ENCODE measurements at regions of chr6 and their contacts with region 1.

Region 1: DNA sequence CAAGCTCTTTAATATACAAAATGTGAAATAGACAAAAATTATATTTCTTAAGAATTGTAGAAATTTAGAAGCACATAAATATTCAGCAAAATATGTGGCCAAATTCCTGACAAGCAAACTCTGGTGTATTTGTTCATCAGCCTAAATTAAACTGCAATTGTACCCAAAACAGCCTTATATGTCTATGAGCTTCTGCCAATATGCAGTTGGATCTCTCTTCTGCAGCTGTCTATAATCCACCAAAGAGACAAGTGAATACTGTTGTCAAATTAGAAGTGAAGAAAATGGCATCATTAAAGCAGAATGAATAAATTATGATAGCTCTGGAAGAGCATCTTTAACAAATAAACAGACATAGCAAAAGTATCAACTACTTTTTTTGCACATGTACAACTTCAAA is 755.7 kb downstream of the GRIK2 start:
- DNase-seq: no peak
- ATAC-seq: no peak

Region 2: GRCh38 chr6:101341926-101342325 is 807.3 kb before region 1 on chr6:
- intact Hi-C with region 1: loop called (anchors 10 kb)
- DNase-seq: no peak
- ATAC-seq: no peak

Region 3: DNA sequence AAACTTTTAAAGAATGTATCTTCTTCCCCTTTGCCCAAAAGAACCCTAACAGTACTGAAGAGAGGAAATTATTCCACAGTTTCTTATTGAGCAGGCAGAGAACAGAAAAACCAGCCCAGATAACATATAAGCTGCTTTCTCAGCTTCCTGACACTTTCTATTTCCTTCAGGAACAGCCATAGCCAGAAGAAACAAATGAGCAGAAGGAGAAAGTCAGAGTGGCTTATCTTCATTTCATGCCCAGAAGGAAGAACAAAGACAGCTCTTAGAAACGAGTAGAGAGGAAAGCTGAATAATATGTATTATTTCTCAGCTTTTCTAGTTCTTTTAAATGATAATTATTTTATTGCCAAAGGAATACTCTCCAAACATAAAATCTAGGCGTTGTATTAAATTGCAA is 38.0 kb after region 1 on chr6:
- intact Hi-C with region 1: no loop called
- DNase-seq: no peak
- ATAC-seq: no peak

Measured in sciatic nerve (tissue), 2 donors.